ENCODE measurements at regions of chr5 and their contacts with region 1.

Region 1: GRCh38 chr5:32585446-32586275 is at the start of gene SUB1:
- DNase-seq: peak; percentile 96
- H3K4me3 Mint-ChIP-seq: peak within 1 kb of the TSS; percentile 86
- H3K27ac Mint-ChIP-seq: peak within 1 kb of the TSS; percentile 96
- H3K4me1 Mint-ChIP-seq: peaks cover 61% of the 10 kb centered on the region
- H3K27me3 Mint-ChIP-seq: no peaks in the 10 kb centered on the region
- total RNA-seq, gene SUB1: 528 to 531 TPM

Region 2: GRCh38 chr5:32174011-32174870 is 411.4 kb before region 1 on chr5 and contains the start of gene GOLPH3:
- CTCF ChIA-PET with region 1: interaction called, 3 read pairs
- POLR2A ChIA-PET with region 1: no interaction called
- intact Hi-C with region 1: loop called (anchors 5 kb)
- DNase-seq: peak; percentile 96
- H3K4me3 Mint-ChIP-seq: peak within 1 kb of the TSS; percentile 99
- H3K27ac Mint-ChIP-seq: peak within 1 kb of the TSS; percentile 98
- H3K4me1 Mint-ChIP-seq: peaks cover 34% of the 10 kb centered on the region
- H3K27me3 Mint-ChIP-seq: peaks cover 4% of the 10 kb centered on the region
- total RNA-seq, gene GOLPH3: 65.6 to 67.1 TPM

Region 3: GRCh38 chr5:32413466-32414263 is 172.0 kb before region 1 on chr5:
- CTCF ChIA-PET with region 1: interaction called, 13 read pairs
- POLR2A ChIA-PET with region 1: no interaction called
- intact Hi-C with region 1: no loop called
- DNase-seq: no peak
- H3K4me3 Mint-ChIP-seq: no peak overlapping the region
- H3K27ac Mint-ChIP-seq: no peak overlapping the region
- H3K4me1 Mint-ChIP-seq: peaks cover 12% of the 10 kb centered on the region
- H3K27me3 Mint-ChIP-seq: no peaks in the 10 kb centered on the region

Region 4: GRCh38 chr5:32462618-32463017 is 123.0 kb before region 1 on chr5:
- CTCF ChIA-PET with region 1: interaction called, 9 read pairs
- POLR2A ChIA-PET with region 1: interaction called, 5 read pairs
- intact Hi-C with region 1: loop called (anchors 1 kb)
- DNase-seq: peak; percentile 80
- H3K4me3 Mint-ChIP-seq: no peak overlapping the region
- H3K27ac Mint-ChIP-seq: peak overlapping the region; percentile 73
- H3K4me1 Mint-ChIP-seq: peaks cover 17% of the 10 kb centered on the region
- H3K27me3 Mint-ChIP-seq: no peaks in the 10 kb centered on the region

Region 5: GRCh38 chr5:32496104-32496503 is 89.6 kb before region 1 on chr5:
- CTCF ChIA-PET with region 1: interaction called, 342 read pairs
- POLR2A ChIA-PET with region 1: interaction called, 19 read pairs
- intact Hi-C with region 1: no loop called
- DNase-seq: no peak
- H3K4me3 Mint-ChIP-seq: no peak overlapping the region
- H3K27ac Mint-ChIP-seq: no peak overlapping the region
- H3K4me1 Mint-ChIP-seq: peaks cover 9% of the 10 kb centered on the region
- H3K27me3 Mint-ChIP-seq: no peaks in the 10 kb centered on the region

Region 6: GRCh38 chr5:32531885-32532520 is 53.7 kb before region 1 on chr5:
- CTCF ChIA-PET with region 1: interaction called, 30 read pairs
- POLR2A ChIA-PET with region 1: interaction called, 47 read pairs
- intact Hi-C with region 1: loop called (anchors 1 kb)
- DNase-seq: peak; percentile 81
- H3K4me3 Mint-ChIP-seq: peak overlapping the region; percentile 91
- H3K27ac Mint-ChIP-seq: peak overlapping the region; percentile 99
- H3K4me1 Mint-ChIP-seq: peaks cover 56% of the 10 kb centered on the region
- H3K27me3 Mint-ChIP-seq: no peaks in the 10 kb centered on the region

Region 7: DNA sequence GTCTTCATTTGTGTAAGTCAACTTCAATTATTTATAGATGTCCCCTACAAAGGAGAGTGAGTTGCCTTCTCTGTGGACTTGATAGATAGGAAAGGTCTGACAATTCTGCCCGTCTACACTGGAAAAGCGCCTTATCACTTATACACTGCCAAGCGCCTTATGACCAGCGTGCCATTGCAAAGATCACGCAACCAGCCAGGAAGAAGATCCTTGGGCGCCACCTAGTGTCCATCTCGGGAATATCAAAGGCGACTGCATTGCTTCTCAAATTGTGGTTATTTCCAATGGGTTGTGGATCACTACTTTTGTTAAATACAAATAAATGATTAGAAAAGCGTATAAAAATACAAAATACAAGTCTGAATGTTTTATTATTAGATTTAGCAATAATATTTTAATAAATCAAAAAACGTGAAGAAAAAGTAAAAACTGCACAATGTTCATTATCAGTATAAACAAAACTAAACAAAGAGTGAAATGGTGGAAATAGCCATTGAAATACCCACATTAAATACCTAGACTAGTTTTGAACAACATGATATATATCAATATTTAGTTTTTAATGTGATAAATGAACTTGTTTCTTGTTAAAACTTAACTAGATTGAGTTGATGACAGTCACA is 27.5 kb after region 1 on chr5:
- CTCF ChIA-PET with region 1: interaction called, 26 read pairs
- POLR2A ChIA-PET with region 1: no interaction called
- intact Hi-C with region 1: loop called (anchors 2 kb)
- DNase-seq: peak; percentile 90
- H3K4me3 Mint-ChIP-seq: no peak overlapping the region
- H3K27ac Mint-ChIP-seq: no peak overlapping the region
- H3K4me1 Mint-ChIP-seq: peaks cover 4% of the 10 kb centered on the region
- H3K27me3 Mint-ChIP-seq: no peaks in the 10 kb centered on the region

Region 8: GRCh38 chr5:32642276-32643002 is 56.8 kb after region 1 on chr5:
- CTCF ChIA-PET with region 1: no interaction called
- POLR2A ChIA-PET with region 1: no interaction called
- intact Hi-C with region 1: no loop called
- DNase-seq: no peak
- H3K4me3 Mint-ChIP-seq: no peak overlapping the region
- H3K27ac Mint-ChIP-seq: no peak overlapping the region
- H3K4me1 Mint-ChIP-seq: no peaks in the 10 kb centered on the region
- H3K27me3 Mint-ChIP-seq: no peaks in the 10 kb centered on the region

Measured in activated CD4-positive, alpha-beta memory T cell treated with anti-CD3 and anti-CD28 coated beads for 36 hours (primary cell).